Activated CD4-positive, alpha-beta T cell treated with anti-CD3 and anti-CD28 coated beads for 36 hours (primary cell): ENCODE measurements at regions of chr16 and their contacts with region 1.

Region 1: GRCh38 chr16:19502395-19503131 is 19.3 kb downstream of the GDE1 start:
- DNase-seq: peak; percentile 83
- ATAC-seq: peak; percentile 53
- H3K4me3 Mint-ChIP-seq: no peak overlapping the region
- H3K27ac Mint-ChIP-seq: no peak overlapping the region
- H3K4me1 Mint-ChIP-seq: no peaks in the 10 kb centered on the region
- H3K27me3 Mint-ChIP-seq: no peaks in the 10 kb centered on the region

Region 2: GRCh38 chr16:19167710-19168370 is 334.7 kb before region 1 on chr16 and contains the start of gene SYT17:
- CTCF ChIA-PET with region 1: no interaction called
- POLR2A ChIA-PET with region 1: no interaction called
- intact Hi-C with region 1: loop called in 1 of 2 experiments (anchors 2 kb)
- DNase-seq: peak; percentile 77
- ATAC-seq: peak; percentile 97
- H3K4me3 Mint-ChIP-seq: no peak within 1 kb of the TSS
- H3K27ac Mint-ChIP-seq: no peak within 1 kb of the TSS
- H3K4me1 Mint-ChIP-seq: no peaks in the 10 kb centered on the region
- H3K27me3 Mint-ChIP-seq: peaks cover 18% of the 10 kb centered on the region
- total RNA-seq, gene SYT17: not detected

Region 3: DNA sequence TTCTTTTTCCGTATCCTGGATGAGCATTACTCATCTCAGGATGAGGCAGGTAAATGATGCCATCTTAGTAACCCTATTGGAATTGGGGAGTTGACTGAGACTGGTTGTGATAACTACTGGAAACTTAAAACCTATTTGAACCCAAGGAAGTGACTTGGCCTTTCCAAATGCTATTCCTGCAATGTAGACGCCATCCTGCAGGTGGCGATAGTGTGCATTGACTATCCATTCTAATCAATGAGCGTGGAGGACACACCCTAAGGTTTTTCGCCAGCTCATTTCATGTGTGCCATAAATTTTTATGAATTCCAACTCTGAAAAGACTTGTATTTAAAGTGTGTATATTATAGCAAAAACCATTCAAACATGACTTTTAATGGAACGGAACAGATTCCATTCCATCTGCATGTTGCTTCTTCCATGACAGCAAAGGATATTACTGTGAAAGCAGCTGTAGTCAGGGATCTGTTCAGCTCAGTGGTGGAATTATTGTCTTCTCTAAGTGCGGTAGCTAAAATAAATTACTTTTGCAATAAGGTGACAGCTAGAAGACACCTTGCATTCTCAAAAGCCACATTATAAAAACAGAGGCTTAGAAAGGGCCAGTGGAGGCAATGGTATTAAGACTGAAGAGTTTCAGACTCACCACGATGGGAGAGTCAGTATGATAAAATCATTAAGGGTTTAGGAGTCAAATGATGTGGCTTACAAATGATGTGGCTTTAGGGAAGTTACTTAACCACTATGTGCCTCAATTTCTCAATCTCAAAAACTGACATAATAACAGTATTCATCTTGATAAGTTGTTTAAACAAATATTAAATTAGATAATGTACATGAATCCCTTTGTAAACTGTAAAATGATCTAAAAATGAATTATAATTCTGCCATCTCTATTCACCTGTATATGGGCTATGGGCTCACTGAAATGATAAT is 279.1 kb before region 1 on chr16:
- CTCF ChIA-PET with region 1: interaction called, 3 read pairs
- POLR2A ChIA-PET with region 1: no interaction called
- intact Hi-C with region 1: loop called in 1 of 2 experiments (anchors 10 kb)
- DNase-seq: peak; percentile 76
- ATAC-seq: no peak
- H3K4me3 Mint-ChIP-seq: no peak overlapping the region
- H3K27ac Mint-ChIP-seq: no peak overlapping the region
- H3K4me1 Mint-ChIP-seq: no peaks in the 10 kb centered on the region
- H3K27me3 Mint-ChIP-seq: peaks cover 11% of the 10 kb centered on the region

Region 4: DNA sequence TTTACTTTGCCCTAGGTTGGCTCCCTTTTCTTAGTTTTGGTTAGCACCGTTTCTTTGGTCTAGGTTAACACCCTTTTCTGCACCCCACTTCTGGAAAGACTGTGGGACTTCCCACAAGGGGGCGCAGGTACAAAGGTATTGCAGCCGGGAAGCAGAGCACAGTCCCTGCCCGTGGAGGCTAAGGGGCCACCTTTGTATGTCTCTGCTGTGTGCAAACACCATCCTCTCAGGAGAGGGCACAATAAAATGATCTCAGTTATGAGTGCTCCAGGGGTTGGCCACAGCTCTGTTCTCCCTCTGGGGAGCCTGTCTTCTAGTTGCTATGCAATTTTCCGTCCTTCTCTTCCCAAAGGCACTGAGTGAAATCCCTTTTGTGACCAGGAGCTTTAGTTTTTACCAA is 113.3 kb before region 1 on chr16:
- CTCF ChIA-PET with region 1: interaction called, 21 read pairs
- POLR2A ChIA-PET with region 1: no interaction called
- intact Hi-C with region 1: loop called (anchors 1 to 5 kb)
- DNase-seq: peak; percentile 74
- ATAC-seq: peak; percentile 44
- H3K4me3 Mint-ChIP-seq: no peak overlapping the region
- H3K27ac Mint-ChIP-seq: no peak overlapping the region
- H3K4me1 Mint-ChIP-seq: no peaks in the 10 kb centered on the region
- H3K27me3 Mint-ChIP-seq: peaks cover 24% of the 10 kb centered on the region

Region 5: GRCh38 chr16:19463487-19463886 is 39.1 kb before region 1 on chr16:
- CTCF ChIA-PET with region 1: no interaction called
- POLR2A ChIA-PET with region 1: no interaction called
- intact Hi-C with region 1: no loop called
- DNase-seq: no peak
- ATAC-seq: no peak
- H3K4me3 Mint-ChIP-seq: no peak overlapping the region
- H3K27ac Mint-ChIP-seq: no peak overlapping the region
- H3K4me1 Mint-ChIP-seq: no peaks in the 10 kb centered on the region
- H3K27me3 Mint-ChIP-seq: peaks cover 3% of the 10 kb centered on the region

Region 6: DNA sequence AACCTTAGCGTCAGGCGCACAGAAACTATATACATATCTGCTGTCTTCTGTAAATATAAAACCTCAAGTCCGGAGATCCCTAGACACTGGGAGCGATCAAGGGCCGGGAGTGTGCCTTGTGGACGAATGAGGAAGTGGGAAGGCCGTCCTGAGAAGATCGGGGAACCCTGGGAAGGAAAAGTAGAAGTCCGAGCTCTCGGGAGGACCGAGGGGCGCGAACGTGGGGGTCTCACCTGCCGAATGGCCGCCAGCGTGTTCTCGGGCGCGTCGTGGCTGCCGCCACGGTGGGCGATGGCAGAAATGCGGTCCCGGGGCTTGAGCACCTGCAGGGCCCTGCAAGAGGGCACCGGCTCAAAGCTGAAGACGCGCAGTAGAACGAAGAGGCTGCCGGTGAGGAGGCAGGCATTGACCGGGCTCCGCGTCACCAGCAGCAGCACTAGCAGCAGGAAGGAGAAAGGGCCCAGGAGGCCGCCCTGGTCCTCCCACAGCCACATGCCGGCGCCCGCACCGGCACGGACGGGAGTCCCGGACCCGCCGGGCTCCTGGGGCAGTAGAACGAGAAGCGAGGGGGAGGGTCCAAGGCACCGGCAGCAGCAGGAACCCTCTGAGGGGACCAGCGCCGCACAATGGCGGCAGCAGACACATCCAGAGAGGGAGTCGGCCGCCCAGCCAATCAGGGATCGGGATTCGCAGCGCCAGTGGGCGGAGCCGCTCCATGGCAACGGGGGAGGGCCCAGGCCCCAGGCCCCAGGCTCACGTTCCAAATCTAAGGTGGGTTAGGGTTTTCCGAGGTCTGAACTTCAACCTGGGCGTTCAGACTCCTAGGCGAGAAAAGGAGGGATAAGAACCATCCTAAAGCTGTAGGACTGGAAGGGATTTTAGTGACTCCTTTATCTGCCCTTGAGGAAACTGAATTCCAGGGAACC is 19.2 kb after region 1 on chr16 and contains the start of gene GDE1:
- CTCF ChIA-PET with region 1: interaction called, 11 read pairs
- POLR2A ChIA-PET with region 1: interaction called, 3 read pairs
- intact Hi-C with region 1: no loop called
- DNase-seq: peak; percentile 97
- ATAC-seq: peak; percentile 83
- H3K4me3 Mint-ChIP-seq: peak within 1 kb of the TSS; percentile 94
- H3K27ac Mint-ChIP-seq: peak within 1 kb of the TSS; percentile 90
- H3K4me1 Mint-ChIP-seq: peaks cover 45% of the 10 kb centered on the region
- H3K27me3 Mint-ChIP-seq: no peaks in the 10 kb centered on the region
- total RNA-seq, gene GDE1: 13.8 to 18.1 TPM